ENCODE measurements at regions of chr7 and their contacts with region 1.

Region 1: GRCh38 chr7:19747740-19748339 is 25.6 kb downstream of the TMEM196 start:
- DNase-seq: peak in 1 of 2 experiments; percentile 42
- H3K4me3 ChIP-seq: no peak overlapping the region
- H3K4me3 Mint-ChIP-seq: no peak overlapping the region
- H3K27ac Mint-ChIP-seq: no peak overlapping the region
- H3K4me1 ChIP-seq: no peaks in the 10 kb centered on the region; the same call in 1 of the 2 replicates
- H3K4me1 Mint-ChIP-seq: peaks cover 14% of the 10 kb centered on the region
- H3K27me3 ChIP-seq: no peaks in the 10 kb centered on the region
- H3K27me3 Mint-ChIP-seq: no peaks in the 10 kb centered on the region
- CTCF ChIP-seq: peak; percentile 45 to 51

Region 2: GRCh38 chr7:19482628-19483027 is 265.2 kb before region 1 on chr7:
- CTCF ChIA-PET with region 1: no interaction called
- POLR2A ChIA-PET with region 1: no interaction called
- intact Hi-C with region 1: no loop called
- DNase-seq: no peak
- H3K4me3 ChIP-seq: no peak overlapping the region
- H3K4me3 Mint-ChIP-seq: no peak overlapping the region
- H3K27ac Mint-ChIP-seq: no peak overlapping the region
- H3K4me1 ChIP-seq: no peaks in the 10 kb centered on the region
- H3K4me1 Mint-ChIP-seq: no peaks in the 10 kb centered on the region
- H3K27me3 ChIP-seq: no peaks in the 10 kb centered on the region
- H3K27me3 Mint-ChIP-seq: peaks cover 3% of the 10 kb centered on the region
- CTCF ChIP-seq: no peak

Region 3: GRCh38 chr7:19681596-19681995 is 66.2 kb before region 1 on chr7:
- CTCF ChIA-PET with region 1: no interaction called
- POLR2A ChIA-PET with region 1: no interaction called
- intact Hi-C with region 1: no loop called
- DNase-seq: no peak
- H3K4me3 ChIP-seq: no peak overlapping the region
- H3K4me3 Mint-ChIP-seq: no peak overlapping the region
- H3K27ac Mint-ChIP-seq: no peak overlapping the region
- H3K4me1 ChIP-seq: no peaks in the 10 kb centered on the region
- H3K4me1 Mint-ChIP-seq: no peaks in the 10 kb centered on the region
- H3K27me3 ChIP-seq: no peaks in the 10 kb centered on the region
- H3K27me3 Mint-ChIP-seq: peaks cover 5% of the 10 kb centered on the region
- CTCF ChIP-seq: no peak

Region 4: GRCh38 chr7:19692111-19692828 is 55.6 kb before region 1 on chr7:
- CTCF ChIA-PET with region 1: no interaction called
- POLR2A ChIA-PET with region 1: no interaction called
- intact Hi-C with region 1: no loop called
- DNase-seq: no peak
- H3K4me3 ChIP-seq: no peak overlapping the region
- H3K4me3 Mint-ChIP-seq: no peak overlapping the region
- H3K27ac Mint-ChIP-seq: no peak overlapping the region
- H3K4me1 ChIP-seq: no peaks in the 10 kb centered on the region
- H3K4me1 Mint-ChIP-seq: no peaks in the 10 kb centered on the region
- H3K27me3 ChIP-seq: no peaks in the 10 kb centered on the region
- H3K27me3 Mint-ChIP-seq: no peaks in the 10 kb centered on the region
- CTCF ChIP-seq: no peak

Region 5: GRCh38 chr7:19708397-19709248 is 39.2 kb before region 1 on chr7 and contains the start of gene POLR1F:
- CTCF ChIA-PET with region 1: interaction called, 24 read pairs
- POLR2A ChIA-PET with region 1: no interaction called
- intact Hi-C with region 1: loop called (anchors 1 kb)
- DNase-seq: peak; percentile 93 to 97
- H3K4me3 ChIP-seq: peak within 1 kb of the TSS; percentile 77
- H3K4me3 Mint-ChIP-seq: peak within 1 kb of the TSS; percentile 95
- H3K27ac Mint-ChIP-seq: peak within 1 kb of the TSS; percentile 93
- H3K4me1 ChIP-seq: peaks cover 12% of the 10 kb centered on the region; the same call in 1 of the 2 replicates
- H3K4me1 Mint-ChIP-seq: peaks cover 28% of the 10 kb centered on the region
- H3K27me3 ChIP-seq: no peaks in the 10 kb centered on the region
- H3K27me3 Mint-ChIP-seq: no peaks in the 10 kb centered on the region
- CTCF ChIP-seq: peak; percentile 87 to 91
- total RNA-seq, gene POLR1F: 15.6 and 21.6 TPM in 2 replicates

Region 6: DNA sequence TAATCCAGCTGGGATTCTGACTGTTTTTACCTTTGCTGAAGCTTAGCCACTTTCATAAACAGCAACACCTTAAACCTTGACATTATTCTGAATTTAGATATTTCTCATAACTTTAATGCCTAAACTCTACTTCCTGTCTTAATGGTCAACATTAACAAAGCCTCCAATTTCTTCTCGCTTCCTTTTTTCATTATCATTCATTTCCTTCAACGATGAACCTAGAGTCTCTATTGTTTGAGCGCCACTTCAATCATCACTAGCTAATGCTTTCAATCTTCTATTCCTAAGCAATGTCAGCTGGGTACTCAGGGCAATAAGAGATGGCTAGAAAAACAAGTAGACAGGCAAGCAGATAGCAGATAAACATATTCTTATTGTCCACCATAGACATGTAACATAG is 122.1 kb after region 1 on chr7:
- CTCF ChIA-PET with region 1: no interaction called
- POLR2A ChIA-PET with region 1: no interaction called
- intact Hi-C with region 1: no loop called
- DNase-seq: no peak
- H3K4me3 ChIP-seq: no peak overlapping the region
- H3K4me3 Mint-ChIP-seq: no peak overlapping the region
- H3K27ac Mint-ChIP-seq: no peak overlapping the region
- H3K4me1 ChIP-seq: peaks cover 16% of the 10 kb centered on the region
- H3K4me1 Mint-ChIP-seq: peaks cover 7% of the 10 kb centered on the region
- H3K27me3 ChIP-seq: no peaks in the 10 kb centered on the region
- H3K27me3 Mint-ChIP-seq: no peaks in the 10 kb centered on the region
- CTCF ChIP-seq: no peak

Region 7: DNA sequence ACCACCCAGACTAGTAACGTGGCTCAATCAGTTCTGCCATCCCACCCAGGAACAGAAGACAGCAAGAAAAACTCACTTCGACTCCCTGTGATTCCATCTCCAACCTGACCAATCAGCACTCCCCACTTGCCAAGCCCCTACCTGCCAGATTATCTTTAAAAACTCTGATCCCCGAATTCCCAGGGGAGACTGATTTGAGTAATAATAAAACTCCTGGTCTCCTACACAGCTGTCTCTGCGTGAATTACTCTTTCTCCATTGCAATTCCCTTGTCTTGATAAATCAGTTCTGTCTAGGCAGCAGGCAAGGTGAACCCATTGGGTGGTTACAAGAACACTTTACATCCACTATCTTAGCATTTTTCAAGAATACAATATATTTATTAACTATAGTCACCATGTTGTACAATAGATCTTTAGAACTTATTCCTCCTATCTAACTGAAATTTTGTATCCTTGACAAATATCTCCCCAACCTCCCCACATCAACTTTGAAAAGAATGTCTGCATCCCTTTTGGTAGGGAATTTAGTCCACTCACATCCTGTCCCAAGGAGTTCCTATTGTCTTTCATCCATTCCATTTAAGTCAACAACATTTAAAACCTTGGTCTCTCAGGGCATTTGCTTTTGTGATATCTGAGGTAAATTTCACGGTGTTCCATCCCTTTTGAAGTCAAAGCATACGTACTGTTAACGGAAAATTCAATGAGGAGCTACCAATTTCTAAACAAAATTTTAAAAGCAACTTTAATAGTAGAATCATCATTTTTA is 305.7 kb after region 1 on chr7:
- CTCF ChIA-PET with region 1: no interaction called
- POLR2A ChIA-PET with region 1: no interaction called
- intact Hi-C with region 1: loop called (anchors 2 kb)
- DNase-seq: no peak
- H3K4me3 ChIP-seq: no peak overlapping the region
- H3K4me3 Mint-ChIP-seq: no peak overlapping the region
- H3K27ac Mint-ChIP-seq: peak overlapping the region; percentile 74
- H3K4me1 ChIP-seq: peaks cover 36% of the 10 kb centered on the region
- H3K4me1 Mint-ChIP-seq: peaks cover 28% of the 10 kb centered on the region
- H3K27me3 ChIP-seq: no peaks in the 10 kb centered on the region
- H3K27me3 Mint-ChIP-seq: no peaks in the 10 kb centered on the region
- CTCF ChIP-seq: no peak

Region 8: DNA sequence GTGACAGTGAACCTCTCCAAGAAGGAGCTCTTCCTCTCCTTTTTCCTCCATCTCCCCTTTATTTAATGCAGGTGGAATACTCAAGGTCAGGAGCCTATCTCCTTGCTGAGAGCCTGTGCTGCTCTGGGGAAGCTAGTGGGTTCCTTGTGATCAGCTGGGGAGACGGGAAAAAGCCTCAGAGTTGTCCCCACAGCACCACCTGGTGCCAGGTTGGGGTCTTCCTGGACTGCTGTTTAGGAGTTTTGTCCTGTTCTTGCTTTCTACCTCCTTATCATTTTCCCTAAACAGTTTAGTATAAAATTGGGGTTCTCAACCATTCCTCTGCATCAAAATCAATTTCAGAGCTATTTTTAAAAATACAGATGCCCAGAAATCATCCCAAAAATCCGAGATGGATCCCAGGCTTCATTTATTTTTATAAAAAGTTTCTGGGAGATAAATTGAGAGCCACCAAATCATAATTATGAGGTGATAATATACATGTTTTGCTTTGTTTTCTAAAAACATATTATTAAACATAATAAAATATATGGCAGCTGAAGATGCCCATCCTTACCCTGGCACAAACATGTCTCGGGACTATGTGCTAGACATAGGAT is 425.0 kb after region 1 on chr7:
- CTCF ChIA-PET with region 1: interaction called, 21 read pairs
- POLR2A ChIA-PET with region 1: no interaction called
- intact Hi-C with region 1: loop called (anchors 1 kb)
- DNase-seq: peak; percentile 78 to 82
- H3K4me3 ChIP-seq: no peak overlapping the region
- H3K4me3 Mint-ChIP-seq: no peak overlapping the region
- H3K27ac Mint-ChIP-seq: no peak overlapping the region
- H3K4me1 ChIP-seq: peaks cover 6% of the 10 kb centered on the region
- H3K4me1 Mint-ChIP-seq: peaks cover 21% of the 10 kb centered on the region
- H3K27me3 ChIP-seq: no peaks in the 10 kb centered on the region
- H3K27me3 Mint-ChIP-seq: no peaks in the 10 kb centered on the region
- CTCF ChIP-seq: peak; percentile 69 to 88

Region 9: GRCh38 chr7:20330240-20330927 is 582.5 kb after region 1 on chr7 and contains the start of gene ITGB8:
- CTCF ChIA-PET with region 1: interaction called, 6 read pairs
- POLR2A ChIA-PET with region 1: no interaction called
- intact Hi-C with region 1: loop called (anchors 1 kb)
- DNase-seq: peak; percentile 76 to 77
- H3K4me3 ChIP-seq: peak within 1 kb of the TSS; percentile 91
- H3K4me3 Mint-ChIP-seq: peak within 1 kb of the TSS; percentile 85
- H3K27ac Mint-ChIP-seq: peak within 1 kb of the TSS; percentile 88
- H3K4me1 ChIP-seq: peaks cover 4% of the 10 kb centered on the region; the same call in 1 of the 2 replicates
- H3K4me1 Mint-ChIP-seq: no peaks in the 10 kb centered on the region
- H3K27me3 ChIP-seq: no peaks in the 10 kb centered on the region
- H3K27me3 Mint-ChIP-seq: no peaks in the 10 kb centered on the region
- CTCF ChIP-seq: no peak
- total RNA-seq, gene ITGB8: 3.2 and 4.6 TPM in 2 replicates

Region 10: DNA sequence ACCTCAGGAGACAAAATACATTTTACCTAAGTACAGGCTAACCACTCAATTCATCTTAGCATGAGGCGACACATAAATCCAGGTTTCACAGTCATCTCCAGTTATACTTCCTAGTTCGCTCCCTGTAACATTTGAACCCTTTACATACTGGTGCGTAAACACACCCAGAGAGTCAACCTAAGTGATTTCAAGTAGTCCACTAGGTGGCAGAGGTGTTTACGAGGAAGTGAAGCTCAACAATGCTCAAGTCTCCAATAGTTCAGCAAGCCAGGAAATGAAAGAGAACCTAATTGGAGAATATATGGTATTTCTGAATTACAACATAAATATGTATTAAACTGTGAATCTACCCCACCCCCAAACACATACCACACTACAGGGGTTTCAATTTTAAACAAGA is 791.4 kb after region 1 on chr7:
- CTCF ChIA-PET with region 1: interaction called, 3 read pairs
- POLR2A ChIA-PET with region 1: no interaction called
- intact Hi-C with region 1: loop called (anchors 5 kb)
- DNase-seq: peak in 1 of 2 experiments; percentile 34
- H3K4me3 ChIP-seq: no peak overlapping the region
- H3K4me3 Mint-ChIP-seq: no peak overlapping the region
- H3K27ac Mint-ChIP-seq: no peak overlapping the region
- H3K4me1 ChIP-seq: no peaks in the 10 kb centered on the region
- H3K4me1 Mint-ChIP-seq: no peaks in the 10 kb centered on the region
- H3K27me3 ChIP-seq: no peaks in the 10 kb centered on the region
- H3K27me3 Mint-ChIP-seq: peaks cover 6% of the 10 kb centered on the region
- CTCF ChIP-seq: peak; percentile 31